ENCODE measurements at regions of chr16 and their contacts with region 1.

Region 1: DNA sequence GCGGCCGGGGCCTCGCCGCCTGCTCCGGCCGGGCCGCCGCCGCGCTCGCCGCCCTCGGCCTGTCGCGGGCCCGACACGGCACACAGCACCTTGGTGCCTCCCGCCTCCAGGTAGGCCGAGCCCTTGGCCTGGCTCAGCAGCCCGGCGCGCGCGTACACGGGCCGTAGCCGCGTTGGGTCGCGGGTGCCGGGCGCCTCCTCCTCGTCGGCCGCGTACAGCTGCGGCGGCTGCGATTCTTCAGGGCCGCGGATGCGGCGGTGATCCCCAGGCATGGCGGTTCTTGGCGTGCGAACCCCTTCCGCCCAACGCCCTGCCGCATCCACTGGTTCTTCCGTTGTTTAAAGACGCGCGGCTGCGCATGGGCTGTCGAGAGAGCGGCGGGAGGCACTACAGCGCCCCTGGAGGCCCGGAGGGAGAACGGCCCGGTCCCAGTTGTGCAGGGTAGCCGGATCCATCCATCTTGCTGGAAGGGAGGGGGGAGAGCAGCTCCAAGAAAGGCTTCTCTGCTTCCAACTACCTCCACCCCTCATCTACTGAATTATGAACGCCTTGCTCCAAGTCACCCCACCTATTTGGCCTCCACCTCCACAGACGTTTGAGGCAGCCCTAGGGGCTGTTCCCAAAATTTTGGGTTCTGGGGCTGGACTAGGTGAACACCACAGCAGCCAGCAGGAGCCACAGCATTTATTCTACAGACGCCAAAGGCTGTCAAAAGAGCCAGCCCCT is at the start of gene EXOSC6:
- DNase-seq: peak; percentile 92 to 94 (median 93)
- H3K4me3 ChIP-seq: peak within 1 kb of the TSS in 1 of 2 donors; percentile 62
- H3K4me3 Mint-ChIP-seq: peak within 1 kb of the TSS; percentile 88 to 92 (median 90)
- H3K27ac ChIP-seq: peak within 1 kb of the TSS; percentile 73
- H3K27ac Mint-ChIP-seq: peak within 1 kb of the TSS; percentile 88 to 96 (median 94)
- H3K4me1 ChIP-seq: peaks cover 28% of the 10 kb centered on the region
- H3K4me1 Mint-ChIP-seq: peaks cover 9 to 35% (median 24%) of the 10 kb centered on the region in 4 donors
- H3K27me3 ChIP-seq: no peaks in the 10 kb centered on the region
- H3K27me3 Mint-ChIP-seq: no peaks in the 10 kb centered on the region
- total RNA-seq, gene EXOSC6: 43.5 to 44.1 TPM

Region 2: DNA sequence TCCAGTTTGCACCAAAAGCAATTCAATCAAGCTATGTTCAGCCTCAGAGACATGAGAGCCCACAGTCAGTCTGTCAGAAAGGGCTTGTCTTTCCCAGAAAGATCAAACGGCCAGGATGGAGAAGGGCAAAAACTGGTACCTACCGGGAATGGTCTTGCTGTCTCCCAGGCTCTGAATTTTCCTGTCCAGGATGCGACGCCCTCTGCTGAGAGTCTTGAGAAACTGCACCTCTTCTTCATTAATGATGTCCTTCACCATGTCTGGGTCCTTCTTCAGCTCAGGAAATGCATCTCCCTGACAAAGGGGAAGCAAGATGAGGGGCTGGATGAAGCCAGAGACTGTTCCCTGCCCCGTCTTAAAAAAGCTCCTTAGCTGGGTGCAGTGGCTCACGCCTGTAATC is 15.7 kb after region 1 on chr16:
- CTCF ChIA-PET with region 1: interaction called, 22 read pairs
- POLR2A ChIA-PET with region 1: interaction called, 5 read pairs
- intact Hi-C with region 1: no loop called
- DNase-seq: peak in 3 of 5 donors; percentile 26 to 31 (median 29)
- H3K4me3 ChIP-seq: no peak overlapping the region
- H3K4me3 Mint-ChIP-seq: no peak overlapping the region
- H3K27ac ChIP-seq: no peak overlapping the region
- H3K27ac Mint-ChIP-seq: peak overlapping the region in 1 of 7 donors; percentile 72
- H3K4me1 ChIP-seq: no peaks in the 10 kb centered on the region
- H3K4me1 Mint-ChIP-seq: peaks cover 0 to 1% (median 0%) of the 10 kb centered on the region in 4 donors
- H3K27me3 ChIP-seq: no peaks in the 10 kb centered on the region
- H3K27me3 Mint-ChIP-seq: no peaks in the 10 kb centered on the region

Region 3: DNA sequence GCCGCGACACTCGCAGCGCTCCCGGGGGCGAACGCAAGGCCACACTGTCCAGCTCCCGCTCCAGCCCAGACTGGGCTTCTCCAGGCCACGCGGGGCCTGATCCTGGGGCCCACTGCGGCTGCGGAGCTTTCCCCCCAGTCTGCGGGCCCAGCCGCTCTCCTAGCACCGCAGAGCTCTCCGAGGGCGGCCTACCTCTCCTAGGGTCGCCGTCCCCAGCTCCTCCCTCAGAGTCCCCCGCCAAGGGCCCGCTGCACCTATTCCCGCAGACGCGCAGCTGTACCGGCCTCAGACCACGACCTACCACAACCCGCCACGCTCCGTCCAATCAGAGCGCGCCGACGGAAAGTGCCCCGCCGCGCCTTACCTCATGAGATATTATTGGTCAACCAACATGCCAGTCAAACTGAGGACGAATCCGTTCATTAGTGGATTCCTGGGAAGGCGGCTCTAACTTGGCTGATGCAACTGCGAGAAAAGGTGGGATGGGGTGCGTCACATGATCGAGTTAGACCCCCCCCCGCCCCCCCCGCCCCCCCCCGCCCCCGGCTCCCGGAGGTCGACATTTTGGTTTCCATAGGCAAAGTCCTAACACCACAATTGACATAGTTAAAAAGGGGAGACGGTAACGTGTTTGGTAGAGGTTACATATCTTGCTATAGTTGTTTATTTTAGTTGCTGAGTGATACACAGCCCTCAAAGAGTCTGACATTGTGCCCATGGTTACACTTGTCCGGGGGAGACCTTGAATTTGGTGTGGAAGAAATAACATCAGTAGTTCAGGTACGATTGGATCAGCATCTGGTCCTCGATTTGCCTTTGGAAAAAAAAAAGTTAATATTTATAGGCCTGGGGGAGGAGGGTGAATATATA is 37.7 kb after region 1 on chr16 and contains the start of gene AARS1:
- CTCF ChIA-PET with region 1: interaction called, 7 read pairs
- POLR2A ChIA-PET with region 1: interaction called, 21 read pairs
- intact Hi-C with region 1: loop called (anchors 1 kb)
- DNase-seq: peak; percentile 95 to 97 (median 96)
- H3K4me3 ChIP-seq: peak within 1 kb of the TSS; percentile 49 to 76
- H3K4me3 Mint-ChIP-seq: peak within 1 kb of the TSS; percentile 96 to 99 (median 98)
- H3K27ac ChIP-seq: peak within 1 kb of the TSS; percentile 87
- H3K27ac Mint-ChIP-seq: peak within 1 kb of the TSS; percentile 90 to 99 (median 98)
- H3K4me1 ChIP-seq: peaks cover 10% of the 10 kb centered on the region
- H3K4me1 Mint-ChIP-seq: peaks cover 7 to 27% (median 20%) of the 10 kb centered on the region in 4 donors
- H3K27me3 ChIP-seq: no peaks in the 10 kb centered on the region
- H3K27me3 Mint-ChIP-seq: no peaks in the 10 kb centered on the region
- total RNA-seq, gene AARS1: 102 to 103 TPM

Region 4: DNA sequence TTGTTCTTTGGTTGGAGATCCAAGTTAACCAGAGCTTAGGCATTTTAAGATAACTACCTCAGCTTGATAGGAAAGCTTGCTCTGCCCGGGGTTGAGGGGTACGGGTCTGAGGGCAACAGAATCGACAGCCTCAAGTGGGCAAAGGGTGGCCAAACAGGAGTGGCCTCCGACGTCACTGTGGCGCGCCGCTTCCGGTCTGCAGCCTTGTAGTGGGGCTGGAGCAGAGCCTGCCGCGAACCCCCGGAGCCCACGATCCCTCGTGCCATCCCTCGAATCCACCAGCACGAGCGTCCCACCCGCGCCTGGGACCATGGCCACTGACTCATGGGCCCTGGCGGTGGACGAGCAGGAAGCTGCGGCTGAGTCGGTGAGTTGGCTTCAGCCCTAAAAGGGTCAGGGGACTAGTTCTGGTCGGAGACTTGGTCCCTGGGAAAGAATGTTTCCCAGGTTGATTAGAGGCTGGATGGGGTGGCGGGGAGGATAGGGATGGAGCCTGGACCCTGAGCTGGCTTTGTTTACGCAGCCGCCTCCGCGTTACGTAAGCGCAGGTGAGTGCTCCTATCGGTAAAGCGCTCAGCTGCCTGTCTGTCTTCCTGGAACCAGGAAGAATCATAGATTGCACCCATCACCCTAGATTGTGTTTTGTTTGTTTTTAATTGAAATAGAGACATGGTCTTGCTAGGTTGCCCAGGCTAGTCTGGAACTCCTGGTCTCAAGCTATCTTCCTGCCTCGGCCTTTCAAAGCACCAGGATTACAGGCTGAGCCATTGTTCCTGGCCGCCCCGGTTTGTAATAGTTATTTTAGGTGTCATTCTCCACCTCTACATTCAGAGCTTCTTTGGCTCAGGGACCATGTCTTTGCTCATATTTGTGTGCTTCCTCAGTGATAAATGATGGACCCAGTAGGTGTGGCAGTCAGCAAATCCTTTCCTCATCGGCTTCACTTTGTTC is 47.5 kb after region 1 on chr16 and contains the start of gene DDX19B:
- CTCF ChIA-PET with region 1: interaction called, 18 read pairs
- POLR2A ChIA-PET with region 1: interaction called, 22 read pairs
- intact Hi-C with region 1: no loop called
- DNase-seq: peak; percentile 42 to 67 (median 57)
- H3K4me3 ChIP-seq: peak within 1 kb of the TSS; percentile 88 to 98
- H3K4me3 Mint-ChIP-seq: peak within 1 kb of the TSS; percentile 93 to 98 (median 96)
- H3K27ac ChIP-seq: peak within 1 kb of the TSS; percentile 93
- H3K27ac Mint-ChIP-seq: peak within 1 kb of the TSS; percentile 95 to 99 (median 99)
- H3K4me1 ChIP-seq: peaks cover 30% of the 10 kb centered on the region
- H3K4me1 Mint-ChIP-seq: peaks cover 26 to 49% (median 37%) of the 10 kb centered on the region in 4 donors
- H3K27me3 ChIP-seq: no peaks in the 10 kb centered on the region
- H3K27me3 Mint-ChIP-seq: no peaks in the 10 kb centered on the region
- total RNA-seq, gene DDX19B: 26.9 to 28.7 TPM

Region 5: GRCh38 chr16:70345840-70346239 is 94.0 kb after region 1 on chr16:
- CTCF ChIA-PET with region 1: interaction called, 3 read pairs
- POLR2A ChIA-PET with region 1: interaction called, 12 read pairs
- intact Hi-C with region 1: loop called (anchors 1 kb)
- DNase-seq: no peak
- H3K4me3 ChIP-seq: peak overlapping the region in 1 of 2 donors; percentile 93
- H3K4me3 Mint-ChIP-seq: peak overlapping the region; percentile 81 to 96 (median 94)
- H3K27ac ChIP-seq: peak overlapping the region; percentile 87
- H3K27ac Mint-ChIP-seq: peak overlapping the region; percentile 91 to 99 (median 99)
- H3K4me1 ChIP-seq: peaks cover 24% of the 10 kb centered on the region
- H3K4me1 Mint-ChIP-seq: peaks cover 16 to 44% (median 23%) of the 10 kb centered on the region in 4 donors
- H3K27me3 ChIP-seq: no peaks in the 10 kb centered on the region
- H3K27me3 Mint-ChIP-seq: no peaks in the 10 kb centered on the region

Region 6: GRCh38 chr16:70428178-70428998 is 176.6 kb after region 1 on chr16:
- CTCF ChIA-PET with region 1: no interaction called
- POLR2A ChIA-PET with region 1: no interaction called
- intact Hi-C with region 1: no loop called
- DNase-seq: peak in 1 of 5 donors; percentile 52
- H3K4me3 ChIP-seq: no peak overlapping the region
- H3K4me3 Mint-ChIP-seq: peak overlapping the region in 6 of 8 donors; percentile 5 to 64 (median 30)
- H3K27ac ChIP-seq: no peak overlapping the region
- H3K27ac Mint-ChIP-seq: peak overlapping the region; percentile 18 to 89 (median 72)
- H3K4me1 ChIP-seq: peaks cover 46% of the 10 kb centered on the region
- H3K4me1 Mint-ChIP-seq: peaks cover 33 to 58% (median 44%) of the 10 kb centered on the region in 4 donors
- H3K27me3 ChIP-seq: no peaks in the 10 kb centered on the region
- H3K27me3 Mint-ChIP-seq: no peaks in the 10 kb centered on the region

Region 7: GRCh38 chr16:70438969-70439862 is 187.4 kb after region 1 on chr16 and contains the start of gene ST3GAL2:
- CTCF ChIA-PET with region 1: no interaction called
- POLR2A ChIA-PET with region 1: interaction called, 4 read pairs
- intact Hi-C with region 1: loop called (anchors 1 kb)
- DNase-seq: peak; percentile 90 to 94 (median 91)
- H3K4me3 ChIP-seq: peak within 1 kb of the TSS; percentile 67 to 95
- H3K4me3 Mint-ChIP-seq: peak within 1 kb of the TSS; percentile 93 to 99 (median 96)
- H3K27ac ChIP-seq: peak within 1 kb of the TSS; percentile 64
- H3K27ac Mint-ChIP-seq: peak within 1 kb of the TSS; percentile 86 to 97 (median 94)
- H3K4me1 ChIP-seq: peaks cover 35% of the 10 kb centered on the region
- H3K4me1 Mint-ChIP-seq: peaks cover 17 to 49% (median 35%) of the 10 kb centered on the region in 4 donors
- H3K27me3 ChIP-seq: no peaks in the 10 kb centered on the region
- H3K27me3 Mint-ChIP-seq: no peaks in the 10 kb centered on the region
- total RNA-seq, gene ST3GAL2: 27.5 to 30.8 TPM

Region 8: GRCh38 chr16:70523076-70523742 is 271.4 kb after region 1 on chr16 and contains the start of gene COG4:
- CTCF ChIA-PET with region 1: interaction called, 3 read pairs
- POLR2A ChIA-PET with region 1: interaction called, 6 read pairs
- intact Hi-C with region 1: loop called (anchors 5 kb)
- DNase-seq: peak; percentile 90 to 94 (median 91)
- H3K4me3 ChIP-seq: peak within 1 kb of the TSS; percentile 90 to 97
- H3K4me3 Mint-ChIP-seq: peak within 1 kb of the TSS; percentile 96 to 99 (median 98)
- H3K27ac ChIP-seq: peak within 1 kb of the TSS; percentile 86
- H3K27ac Mint-ChIP-seq: peak within 1 kb of the TSS; percentile 97 to 100 (median 99)
- H3K4me1 ChIP-seq: peaks cover 64% of the 10 kb centered on the region
- H3K4me1 Mint-ChIP-seq: peaks cover 35 to 75% (median 54%) of the 10 kb centered on the region in 4 donors
- H3K27me3 ChIP-seq: no peaks in the 10 kb centered on the region
- H3K27me3 Mint-ChIP-seq: no peaks in the 10 kb centered on the region
- total RNA-seq, gene COG4: 66.5 to 68.9 TPM